Panc1 (cell line): ENCODE measurements at regions of chr5 and their contacts with region 1.

Region 1: GRCh38 chr5:108381954-108382783 is at the start of gene FBXL17:
- DNase-seq: peak; percentile 79
- ATAC-seq: peak; percentile 90
- H3K4me3 ChIP-seq: peak within 1 kb of the TSS; percentile 79 to 89
- H3K27ac ChIP-seq: peak within 1 kb of the TSS; percentile 94
- H3K4me1 ChIP-seq: peaks cover 21% of the 10 kb centered on the region
- H3K27me3 ChIP-seq: no peaks in the 10 kb centered on the region
- CTCF ChIP-seq: no peak
- total RNA-seq, gene FBXL17: 17.4 TPM

Region 2: DNA sequence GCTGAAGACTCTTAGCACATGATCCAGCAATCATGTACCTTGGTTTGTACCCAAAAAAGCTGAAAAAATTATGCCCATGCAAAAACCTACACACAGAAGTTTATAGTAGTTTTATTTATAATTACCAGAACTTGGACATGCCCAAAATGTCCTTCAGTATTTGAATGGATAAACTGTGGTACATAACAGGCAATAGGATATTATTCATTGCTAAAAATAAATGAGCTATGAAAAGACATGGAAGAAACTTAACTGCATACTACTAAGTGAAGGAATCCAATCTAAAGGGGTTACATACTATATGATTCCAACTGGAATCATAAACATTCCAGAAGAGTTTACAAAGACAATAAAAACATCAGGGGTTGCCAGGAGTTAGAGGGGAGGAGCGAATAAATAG is 25.9 kb before region 1 on chr5:
- CTCF ChIA-PET with region 1: no interaction called
- POLR2A ChIA-PET with region 1: interaction called, 10 read pairs
- in situ Hi-C with region 1: no loop called
- intact Hi-C with region 1: no loop called
- DNase-seq: no peak
- ATAC-seq: no peak
- H3K4me3 ChIP-seq: no peak overlapping the region
- H3K27ac ChIP-seq: no peak overlapping the region
- H3K4me1 ChIP-seq: no peaks in the 10 kb centered on the region
- H3K27me3 ChIP-seq: no peaks in the 10 kb centered on the region
- CTCF ChIP-seq: no peak

Region 3: GRCh38 chr5:108451269-108451668 is 69.1 kb after region 1 on chr5:
- CTCF ChIA-PET with region 1: no interaction called
- POLR2A ChIA-PET with region 1: interaction called, 23 read pairs
- in situ Hi-C with region 1: no loop called
- intact Hi-C with region 1: no loop called
- DNase-seq: no peak
- ATAC-seq: no peak
- H3K4me3 ChIP-seq: no peak overlapping the region
- H3K27ac ChIP-seq: no peak overlapping the region
- H3K4me1 ChIP-seq: no peaks in the 10 kb centered on the region
- H3K27me3 ChIP-seq: no peaks in the 10 kb centered on the region
- CTCF ChIP-seq: no peak; the same call in 1 of the 2 replicates

Region 4: DNA sequence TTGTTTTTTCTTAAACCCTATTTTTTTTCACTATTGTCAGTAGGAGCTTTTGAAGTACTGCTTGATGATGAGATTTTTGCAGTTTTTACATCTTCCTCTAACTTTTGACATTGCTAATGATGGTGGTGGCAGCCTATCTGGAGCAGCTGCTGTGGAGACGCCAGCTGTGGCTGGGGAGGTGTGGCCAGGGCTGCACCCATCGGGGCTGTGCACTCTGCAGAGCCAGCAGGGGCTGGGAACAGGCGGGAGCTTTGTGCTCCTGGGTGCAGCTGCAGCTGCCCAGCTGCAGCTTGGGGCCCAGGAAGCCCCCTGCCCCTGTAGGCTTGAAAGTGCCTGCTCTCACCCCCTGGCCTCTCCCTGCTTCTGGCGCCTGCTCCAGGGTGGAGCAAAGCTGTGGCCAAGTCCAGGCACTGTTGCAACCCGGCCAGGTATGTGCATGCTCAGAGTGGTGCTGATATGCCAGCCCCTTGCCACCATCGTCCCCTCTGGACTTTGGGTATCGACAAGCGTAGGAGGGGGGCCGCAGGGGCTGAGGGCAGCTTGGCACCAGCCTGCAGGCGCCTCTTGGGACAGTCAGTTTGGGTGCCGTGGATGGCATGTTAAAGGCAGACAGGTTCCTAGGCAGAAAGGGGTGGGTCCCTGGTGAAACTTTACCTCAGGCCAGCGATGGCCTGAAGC is 404.8 kb after region 1 on chr5:
- CTCF ChIA-PET with region 1: no interaction called
- POLR2A ChIA-PET with region 1: no interaction called
- in situ Hi-C with region 1: no loop called
- intact Hi-C with region 1: no loop called
- DNase-seq: no peak
- ATAC-seq: no peak
- H3K4me3 ChIP-seq: no peak overlapping the region
- H3K27ac ChIP-seq: no peak overlapping the region
- H3K4me1 ChIP-seq: no peaks in the 10 kb centered on the region
- H3K27me3 ChIP-seq: no peaks in the 10 kb centered on the region
- CTCF ChIP-seq: no peak